Panc1 (cell line): ENCODE measurements at regions of chr6 and their contacts with region 1.

Region 1: DNA sequence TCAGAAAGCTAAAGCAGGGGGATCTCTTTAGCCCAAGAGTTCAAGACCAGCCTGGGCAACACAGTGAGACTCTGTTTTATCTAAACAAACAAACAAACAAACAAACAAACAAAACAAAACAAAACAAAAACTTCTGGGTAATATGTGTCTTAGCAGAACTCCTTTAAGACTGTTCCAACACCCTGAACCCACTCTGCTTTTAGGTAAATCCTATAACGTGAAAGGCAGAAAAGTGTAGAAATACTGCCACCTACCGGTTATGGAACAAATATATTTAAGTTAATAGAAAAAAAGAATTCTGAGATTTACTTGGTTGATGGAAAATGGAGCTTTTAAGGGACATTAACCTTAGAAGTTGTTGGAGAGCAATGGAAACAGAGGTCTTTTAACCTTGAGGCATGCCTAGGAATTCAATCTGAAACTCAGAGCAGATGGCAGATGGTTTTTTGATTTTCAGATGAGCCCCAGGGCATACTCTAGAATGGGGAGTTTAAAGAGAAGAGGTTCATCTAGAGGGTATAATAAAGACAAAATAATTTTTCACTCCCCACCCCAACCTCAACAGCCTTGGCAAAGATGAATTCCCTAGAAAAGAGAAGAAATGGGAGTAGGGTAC is 38.5 kb downstream of the SOD2 start:
- DNase-seq: peak; percentile 13
- ATAC-seq: peak; percentile 65
- H3K4me3 ChIP-seq: no peak overlapping the region
- H3K27ac ChIP-seq: no peak overlapping the region
- H3K4me1 ChIP-seq: peaks cover 6% of the 10 kb centered on the region; the same call in 1 of the 2 replicates
- H3K27me3 ChIP-seq: no peaks in the 10 kb centered on the region
- CTCF ChIP-seq: peak; percentile 66

Region 2: GRCh38 chr6:159169557-159170332 is 484.8 kb before region 1 on chr6:
- CTCF ChIA-PET with region 1: no interaction called
- POLR2A ChIA-PET with region 1: no interaction called
- in situ Hi-C with region 1: no loop called
- intact Hi-C with region 1: loop called (anchors 2 kb)
- DNase-seq: no peak
- ATAC-seq: peak; percentile 51
- H3K4me3 ChIP-seq: peak overlapping the region; percentile 25 to 44
- H3K27ac ChIP-seq: no peak overlapping the region
- H3K4me1 ChIP-seq: peaks cover 8% of the 10 kb centered on the region
- H3K27me3 ChIP-seq: peaks cover 39% of the 10 kb centered on the region
- CTCF ChIP-seq: no peak; the same call in 1 of the 2 replicates

Region 3: DNA sequence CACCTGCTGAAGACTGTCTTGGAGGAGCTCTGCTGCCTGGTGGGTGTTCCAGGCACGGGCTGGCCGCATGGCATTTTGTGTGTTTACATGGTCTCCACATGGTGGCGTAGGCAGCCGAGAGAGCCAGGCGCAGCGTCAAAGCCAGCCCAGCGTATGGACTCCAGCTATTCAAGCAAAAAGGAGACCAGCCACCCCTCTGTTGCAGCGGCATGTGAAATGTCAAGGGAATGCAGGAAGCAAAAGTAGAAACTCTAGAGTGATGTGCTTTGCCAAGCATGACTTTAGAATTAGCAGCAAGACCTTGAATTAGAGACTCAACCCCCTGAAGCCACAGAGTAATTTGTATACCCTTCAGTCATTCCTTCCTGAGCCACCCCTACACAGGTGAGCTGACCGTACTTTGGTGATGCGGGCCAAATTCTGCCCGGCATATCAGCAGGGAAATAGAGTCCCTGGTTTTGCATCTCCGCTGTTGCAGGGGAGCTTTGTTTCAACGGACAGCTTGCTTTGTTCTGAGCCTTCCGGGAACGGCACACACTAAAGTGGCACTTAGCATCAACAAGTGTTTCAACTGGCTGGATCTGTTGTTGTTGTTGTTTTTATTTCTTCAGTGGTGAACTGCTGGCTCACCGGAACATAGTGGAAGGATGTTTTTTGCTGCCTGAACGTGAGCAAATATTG is 436.9 kb before region 1 on chr6:
- CTCF ChIA-PET with region 1: interaction called, 6 read pairs
- POLR2A ChIA-PET with region 1: no interaction called
- in situ Hi-C with region 1: no loop called
- intact Hi-C with region 1: loop called (anchors 2 kb)
- DNase-seq: no peak
- ATAC-seq: peak; percentile 94
- H3K4me3 ChIP-seq: no peak overlapping the region
- H3K27ac ChIP-seq: no peak overlapping the region
- H3K4me1 ChIP-seq: no peaks in the 10 kb centered on the region
- H3K27me3 ChIP-seq: peaks cover 14% of the 10 kb centered on the region; the same call in 1 of the 2 replicates
- CTCF ChIP-seq: peak; percentile 78